Mammary epithelial cell (primary cell): ENCODE measurements at regions of chr4 and their contacts with region 1.

Region 1: GRCh38 chr4:105520817-105521790 is 31.3 kb upstream of the ARHGEF38 start:
- DNase-seq: peak; percentile 36
- H3K4me3 ChIP-seq: no peak overlapping the region
- H3K27ac ChIP-seq: no peak overlapping the region
- H3K4me1 ChIP-seq: no peaks in the 10 kb centered on the region
- H3K27me3 ChIP-seq: no peaks in the 10 kb centered on the region
- CTCF ChIP-seq: peak; percentile 74 to 81

Region 2: GRCh38 chr4:105483840-105484239 is 37.3 kb before region 1 on chr4:
- CTCF ChIA-PET with region 1: no interaction called
- dilution Hi-C with region 1: no loop called
- in situ Hi-C with region 1: no loop called
- intact Hi-C with region 1: no loop called
- DNase-seq: no peak
- H3K4me3 ChIP-seq: no peak overlapping the region
- H3K27ac ChIP-seq: no peak overlapping the region
- H3K4me1 ChIP-seq: no peaks in the 10 kb centered on the region
- H3K27me3 ChIP-seq: no peaks in the 10 kb centered on the region
- CTCF ChIP-seq: no peak

Region 3: GRCh38 chr4:105666693-105667092 is 145.6 kb after region 1 on chr4:
- CTCF ChIA-PET with region 1: interaction called, 15 read pairs
- dilution Hi-C with region 1: no loop called
- in situ Hi-C with region 1: loop called (anchors 10 kb)
- intact Hi-C with region 1: loop called (anchors 1 kb)
- DNase-seq: peak; percentile 39
- H3K4me3 ChIP-seq: no peak overlapping the region
- H3K27ac ChIP-seq: no peak overlapping the region
- H3K4me1 ChIP-seq: no peaks in the 10 kb centered on the region
- H3K27me3 ChIP-seq: peaks cover 3% of the 10 kb centered on the region
- CTCF ChIP-seq: peak; percentile 51 to 53

Region 4: DNA sequence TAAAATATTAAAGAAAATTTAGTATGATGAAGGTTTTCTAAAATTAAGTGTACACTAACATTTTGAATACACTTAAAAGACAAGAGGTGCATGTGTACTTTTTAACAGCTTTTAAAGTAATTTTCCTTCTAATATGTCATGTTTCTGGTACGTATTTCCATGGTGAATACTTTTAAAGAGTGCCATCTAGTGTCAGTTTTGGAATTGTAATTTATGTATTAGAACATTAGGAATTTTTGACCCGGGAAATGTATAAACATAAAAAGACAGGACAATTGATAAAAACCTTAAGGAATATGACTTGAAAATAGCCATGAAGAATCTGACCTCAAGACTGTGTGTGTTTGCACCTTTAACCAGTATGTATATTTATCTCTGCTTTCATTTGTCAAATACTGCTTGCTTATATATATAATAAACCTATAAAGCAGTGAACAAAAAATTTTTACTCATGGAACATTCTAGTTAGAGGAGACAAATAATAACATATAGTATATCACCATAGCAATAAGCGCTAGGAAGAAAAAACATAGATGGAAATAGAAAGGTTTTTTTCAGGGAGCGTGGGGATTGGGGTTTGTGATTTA is 194.7 kb after region 1 on chr4:
- CTCF ChIA-PET with region 1: interaction called, 3 read pairs
- dilution Hi-C with region 1: no loop called
- in situ Hi-C with region 1: no loop called
- intact Hi-C with region 1: loop called (anchors 2 kb)
- DNase-seq: peak; percentile 22
- H3K4me3 ChIP-seq: no peak overlapping the region
- H3K27ac ChIP-seq: peak overlapping the region; percentile 12
- H3K4me1 ChIP-seq: peaks cover 9% of the 10 kb centered on the region
- H3K27me3 ChIP-seq: no peaks in the 10 kb centered on the region
- CTCF ChIP-seq: peak; percentile 44 to 55